ENCODE measurements at regions of chr1 and their contacts with region 1.

Region 1: GRCh38 chr1:198096390-198096789 is 60.4 kb upstream of the NEK7 start:
- DNase-seq: no peak
- H3K4me3 ChIP-seq: no peak overlapping the region
- H3K27ac ChIP-seq: no peak overlapping the region
- H3K4me1 ChIP-seq: peaks cover 0 to 4% (median 0%) of the 10 kb centered on the region in 6 donors
- H3K27me3 ChIP-seq: no peaks in the 10 kb centered on the region
- CTCF ChIP-seq: no peak
- POLR2A ChIP-seq: no peak

Region 2: DNA sequence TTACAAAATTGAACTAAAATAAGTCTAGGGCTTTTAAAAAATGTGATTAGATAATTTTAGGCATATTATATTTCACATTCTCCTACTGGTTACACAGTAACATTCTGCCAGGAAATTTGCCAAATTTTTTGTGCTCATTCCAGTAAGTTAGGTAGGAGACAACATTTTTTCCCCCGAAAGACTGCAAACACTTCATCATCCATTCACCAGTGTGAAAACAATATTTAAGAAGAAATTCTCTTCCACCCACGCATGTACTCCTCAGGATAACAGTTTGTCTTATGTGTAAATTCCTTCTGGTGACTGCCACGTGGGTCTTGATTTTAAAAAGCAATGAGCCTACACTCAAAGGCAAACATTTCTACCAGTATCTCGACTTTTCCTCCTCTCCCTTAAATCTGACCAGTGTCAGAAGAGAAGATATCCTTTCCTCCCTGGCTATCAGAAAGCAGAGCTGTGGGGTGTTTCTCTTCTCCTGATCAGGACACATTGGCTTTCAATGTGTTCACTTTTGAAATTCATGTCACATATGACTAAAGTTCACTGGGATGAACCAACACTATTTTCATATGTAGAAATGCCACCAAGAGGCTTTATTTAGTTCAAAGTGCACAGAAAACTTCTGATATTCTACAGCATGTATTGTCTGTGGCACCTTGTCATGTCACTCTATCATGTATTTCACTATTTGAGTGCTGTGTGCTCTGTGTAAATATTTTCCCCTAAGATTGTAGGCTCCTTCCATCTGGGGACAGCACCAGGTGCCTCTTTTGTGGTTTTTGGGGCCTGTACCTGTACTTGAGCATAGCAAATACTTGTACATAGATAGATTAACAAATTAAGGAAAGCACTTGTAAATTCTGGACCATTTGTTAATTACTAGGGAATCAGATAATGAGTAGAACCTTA is 140.7 kb before region 1 on chr1:
- intact Hi-C with region 1: no loop called
- DNase-seq: no peak
- H3K4me3 ChIP-seq: no peak overlapping the region
- H3K27ac ChIP-seq: no peak overlapping the region
- H3K4me1 ChIP-seq: no peaks in the 10 kb centered on the region
- H3K27me3 ChIP-seq: no peaks in the 10 kb centered on the region
- CTCF ChIP-seq: no peak
- POLR2A ChIP-seq: no peak

Region 3: DNA sequence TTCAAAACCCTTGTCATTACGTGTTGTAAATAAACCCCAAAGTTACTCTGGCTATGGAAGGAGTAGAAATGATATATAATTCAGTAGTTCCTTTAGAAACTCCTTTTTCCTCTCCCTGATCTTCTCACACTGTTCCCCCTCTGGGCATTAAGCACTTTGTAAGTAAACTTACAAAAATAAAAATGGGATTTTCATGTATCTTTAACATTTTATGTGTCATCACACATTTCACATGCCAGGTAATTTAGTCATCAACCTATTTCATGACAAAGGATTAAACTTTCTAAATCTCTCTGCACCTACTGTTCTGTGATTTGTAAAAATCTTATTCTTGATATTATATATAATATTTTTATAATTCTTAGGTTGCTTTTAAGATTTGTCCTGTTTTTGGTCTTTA is 237.4 kb after region 1 on chr1:
- intact Hi-C with region 1: no loop called
- DNase-seq: no peak
- H3K4me3 ChIP-seq: no peak overlapping the region
- H3K27ac ChIP-seq: no peak overlapping the region
- H3K4me1 ChIP-seq: no peaks in the 10 kb centered on the region
- H3K27me3 ChIP-seq: no peaks in the 10 kb centered on the region
- CTCF ChIP-seq: no peak
- POLR2A ChIP-seq: no peak

Region 4: GRCh38 chr1:198359024-198359653 is 262.7 kb after region 1 on chr1:
- intact Hi-C with region 1: loop called (anchors 10 kb)
- DNase-seq: no peak
- H3K4me3 ChIP-seq: no peak overlapping the region
- H3K27ac ChIP-seq: no peak overlapping the region
- H3K4me1 ChIP-seq: no peaks in the 10 kb centered on the region
- H3K27me3 ChIP-seq: no peaks in the 10 kb centered on the region
- CTCF ChIP-seq: peak in 8 of 11 experiments; percentile 30 to 57 (median 46)
- POLR2A ChIP-seq: no peak